ENCODE measurements at regions of chr3 and their contacts with region 1.

Region 1: GRCh38 chr3:59313365-59313764 is 263.5 kb upstream of the CFAP20DC start:
- DNase-seq: peak; percentile 68
- H3K4me3 Mint-ChIP-seq: no peak overlapping the region
- H3K27ac Mint-ChIP-seq: no peak overlapping the region
- H3K4me1 Mint-ChIP-seq: peaks cover 23% of the 10 kb centered on the region
- H3K27me3 Mint-ChIP-seq: no peaks in the 10 kb centered on the region

Region 2: GRCh38 chr3:59444294-59444671 is 130.9 kb after region 1 on chr3:
- CTCF ChIA-PET with region 1: interaction called, 14 read pairs
- POLR2A ChIA-PET with region 1: no interaction called
- intact Hi-C with region 1: no loop called
- DNase-seq: peak; percentile 48
- H3K4me3 Mint-ChIP-seq: peak overlapping the region; percentile 38
- H3K27ac Mint-ChIP-seq: peak overlapping the region; percentile 49
- H3K4me1 Mint-ChIP-seq: peaks cover 50% of the 10 kb centered on the region
- H3K27me3 Mint-ChIP-seq: peaks cover 1% of the 10 kb centered on the region

Region 3: DNA sequence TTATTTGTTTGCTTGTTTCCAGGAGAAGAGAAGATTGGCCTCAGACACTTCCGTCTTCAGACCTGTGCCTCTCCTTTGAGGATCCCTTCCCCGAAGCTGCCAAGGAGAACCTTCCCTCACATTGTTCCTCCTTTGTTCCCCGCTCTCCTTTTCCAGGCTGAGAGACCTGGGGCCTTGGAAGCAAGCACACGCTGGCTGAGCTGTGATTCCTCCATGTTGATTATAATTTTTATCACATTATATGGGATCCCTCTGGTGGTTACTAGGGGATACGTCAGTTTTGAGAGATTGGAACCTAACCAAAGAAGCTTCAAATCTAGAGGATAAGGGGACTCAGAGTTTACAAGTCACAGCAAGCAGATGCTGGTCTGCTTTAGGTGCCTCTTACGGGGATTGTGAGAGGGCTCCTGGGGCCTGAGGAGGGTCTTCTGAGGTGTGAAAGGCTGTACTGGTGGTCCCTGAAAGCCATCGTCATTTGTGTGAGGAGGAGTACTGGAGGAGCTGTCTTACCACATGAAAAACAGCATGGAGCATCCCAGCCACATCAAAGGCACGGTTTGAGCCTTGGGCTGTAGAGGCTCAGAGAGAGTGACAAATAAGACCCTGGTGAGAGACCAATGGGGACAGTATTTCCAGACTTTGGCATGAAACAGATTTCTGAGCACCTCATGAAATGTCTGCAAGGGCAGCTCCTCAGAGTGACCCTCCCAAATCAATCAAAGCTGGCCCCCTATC is 496.5 kb after region 1 on chr3:
- CTCF ChIA-PET with region 1: interaction called, 15 read pairs
- POLR2A ChIA-PET with region 1: no interaction called
- intact Hi-C with region 1: no loop called
- DNase-seq: no peak
- H3K4me3 Mint-ChIP-seq: no peak overlapping the region
- H3K27ac Mint-ChIP-seq: no peak overlapping the region
- H3K4me1 Mint-ChIP-seq: no peaks in the 10 kb centered on the region
- H3K27me3 Mint-ChIP-seq: no peaks in the 10 kb centered on the region

Region 4: GRCh38 chr3:59857589-59858346 is 544.4 kb after region 1 on chr3:
- CTCF ChIA-PET with region 1: interaction called, 29 read pairs
- POLR2A ChIA-PET with region 1: interaction called, 3 read pairs
- intact Hi-C with region 1: loop called (anchors 2 kb)
- DNase-seq: peak; percentile 84
- H3K4me3 Mint-ChIP-seq: no peak overlapping the region
- H3K27ac Mint-ChIP-seq: no peak overlapping the region
- H3K4me1 Mint-ChIP-seq: peaks cover 11% of the 10 kb centered on the region
- H3K27me3 Mint-ChIP-seq: no peaks in the 10 kb centered on the region